HAP-1 (cell line): ENCODE measurements at regions of chr2 and their contacts with region 1.

Region 1: GRCh38 chr2:50492477-50492851 is 539.5 kb downstream of the NRXN1 start:
- DNase-seq: peak; percentile 71 to 87
- H3K4me3 ChIP-seq: no peak overlapping the region
- H3K4me1 ChIP-seq: peaks cover 10% of the 10 kb centered on the region
- H3K27me3 ChIP-seq: no peaks in the 10 kb centered on the region

Region 2: GRCh38 chr2:49770919-49771318 is 721.5 kb before region 1 on chr2:
- in situ Hi-C with region 1: loop called (anchors 25 kb)
- DNase-seq: peak; percentile 34 to 78
- H3K4me3 ChIP-seq: no peak overlapping the region
- H3K4me1 ChIP-seq: no peaks in the 10 kb centered on the region
- H3K27me3 ChIP-seq: no peaks in the 10 kb centered on the region

Region 3: DNA sequence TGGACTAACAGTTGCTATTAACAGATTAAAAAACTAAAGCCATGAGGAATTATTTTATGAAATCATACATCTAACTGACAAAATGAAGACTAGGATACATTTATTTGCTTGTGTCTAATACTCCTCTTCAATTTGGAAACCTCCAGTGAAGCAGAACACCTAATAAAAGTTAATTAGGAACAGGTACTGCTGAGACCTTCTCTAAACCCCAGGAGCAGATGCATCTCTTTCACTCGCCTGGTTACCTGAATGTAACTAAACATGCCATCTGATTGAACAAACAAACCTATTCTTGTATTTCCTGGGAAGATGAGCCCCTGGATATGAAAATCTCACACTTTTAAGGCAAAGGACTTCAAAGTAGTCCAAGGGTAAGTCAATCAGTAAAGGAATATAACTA is 358.7 kb before region 1 on chr2:
- in situ Hi-C with region 1: no loop called
- DNase-seq: no peak
- H3K4me3 ChIP-seq: no peak overlapping the region
- H3K4me1 ChIP-seq: peaks cover 29% of the 10 kb centered on the region
- H3K27me3 ChIP-seq: no peaks in the 10 kb centered on the region

Region 4: GRCh38 chr2:50167271-50167670 is 325.2 kb before region 1 on chr2:
- in situ Hi-C with region 1: loop called (anchors 25 kb)
- DNase-seq: no peak
- H3K4me3 ChIP-seq: no peak overlapping the region
- H3K4me1 ChIP-seq: no peaks in the 10 kb centered on the region
- H3K27me3 ChIP-seq: no peaks in the 10 kb centered on the region

Region 5: GRCh38 chr2:50385349-50385748 is 107.1 kb before region 1 on chr2:
- in situ Hi-C with region 1: no loop called
- DNase-seq: no peak
- H3K4me3 ChIP-seq: no peak overlapping the region
- H3K4me1 ChIP-seq: 0 out of 2 replicates have a peak, but pooled peaks cover 2% of the 10 kb centered on the region
- H3K27me3 ChIP-seq: no peaks in the 10 kb centered on the region

Region 6: GRCh38 chr2:50763776-50764175 is 271.3 kb after region 1 on chr2:
- in situ Hi-C with region 1: no loop called
- DNase-seq: no peak
- H3K4me3 ChIP-seq: no peak overlapping the region
- H3K4me1 ChIP-seq: no peaks in the 10 kb centered on the region
- H3K27me3 ChIP-seq: no peaks in the 10 kb centered on the region